CD14-positive monocyte (primary cell): ENCODE measurements at regions of chr16 and their contacts with region 1.

Region 1: DNA sequence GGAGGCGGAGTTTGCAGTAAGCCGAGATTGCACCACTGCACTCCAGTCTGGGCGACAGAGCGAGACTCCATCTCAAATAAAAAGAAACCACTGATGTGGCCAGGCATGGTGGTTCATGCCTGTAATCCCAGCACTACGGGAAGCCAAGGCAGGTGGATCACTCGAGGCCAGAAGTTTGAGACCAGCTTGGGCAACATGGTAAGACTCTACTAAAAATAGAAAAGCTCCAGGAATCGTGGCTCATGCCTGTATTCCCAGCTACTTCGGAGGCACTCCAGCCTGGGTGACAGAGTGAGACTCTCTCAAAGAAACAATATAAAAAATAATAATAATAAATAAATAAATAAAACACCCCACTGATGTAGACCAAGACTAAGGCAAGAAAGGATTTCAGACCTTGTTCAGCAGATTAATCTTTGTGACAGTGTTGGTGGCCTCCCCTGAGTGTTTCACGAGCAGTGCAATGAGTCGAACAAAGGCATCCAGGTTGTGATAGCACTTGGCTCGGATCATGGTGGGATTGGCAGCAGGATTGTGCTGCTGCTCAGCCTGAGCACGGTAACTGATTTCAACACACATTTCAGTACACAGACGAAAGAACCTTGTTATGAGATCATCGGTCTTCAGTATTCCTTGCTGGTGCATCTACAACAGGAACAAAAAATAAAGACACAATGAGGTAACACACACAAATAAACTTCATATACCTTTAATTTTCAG is 18.6 kb downstream of the SETD6 start:
- DNase-seq: no peak
- H3K4me3 ChIP-seq: no peak overlapping the region
- H3K4me3 Mint-ChIP-seq: no peak overlapping the region
- H3K27ac ChIP-seq: no peak overlapping the region
- H3K27ac Mint-ChIP-seq: peak overlapping the region in 1 of 7 donors; percentile 46
- H3K4me1 ChIP-seq: no peaks in the 10 kb centered on the region
- H3K4me1 Mint-ChIP-seq: no peaks in the 10 kb centered on the region
- H3K27me3 ChIP-seq: no peaks in the 10 kb centered on the region
- H3K27me3 Mint-ChIP-seq: no peaks in the 10 kb centered on the region
- CTCF ChIP-seq: no peak

Region 2: DNA sequence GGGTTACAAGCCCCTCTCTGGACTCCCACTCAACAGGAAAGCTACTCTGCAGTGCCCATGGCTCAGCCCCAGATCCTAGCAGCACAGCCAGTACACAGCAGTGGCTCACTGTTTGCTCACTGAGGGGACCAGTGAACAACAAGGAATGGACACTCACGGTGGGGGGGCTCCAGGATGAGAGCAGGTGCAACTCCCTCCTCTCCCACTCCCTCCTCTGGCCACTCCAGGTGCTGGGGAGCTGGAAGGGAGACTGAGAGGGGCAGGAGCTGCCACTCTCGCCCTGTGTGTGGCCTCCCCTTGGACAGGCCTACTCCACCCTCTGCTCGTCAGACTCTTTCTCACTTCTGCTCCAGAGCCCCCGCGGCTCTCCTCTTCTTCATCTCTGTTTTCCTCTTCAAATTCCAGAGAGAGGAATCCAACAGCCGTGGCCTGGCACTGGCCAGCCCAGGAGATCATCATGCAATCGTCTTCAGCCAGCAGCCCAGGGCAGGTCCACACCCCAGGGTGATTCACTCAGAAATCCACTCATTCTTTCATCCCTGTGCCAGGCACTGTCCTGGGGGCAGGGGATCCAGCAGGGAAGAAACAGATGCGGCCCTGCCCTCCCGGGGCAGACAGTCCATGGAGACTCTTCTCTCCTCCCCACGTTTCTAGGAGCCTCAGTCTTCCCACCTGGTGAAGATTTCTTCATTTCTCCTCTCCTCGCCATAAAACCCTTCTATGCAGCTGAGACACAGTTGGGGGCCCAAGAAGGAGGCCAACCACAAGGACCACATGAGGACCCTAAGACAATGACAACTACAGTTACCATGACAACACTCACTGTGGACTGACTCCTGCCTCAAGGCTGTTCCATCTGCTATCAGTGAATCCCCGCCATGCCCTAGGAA is 435.5 kb before region 1 on chr16:
- intact Hi-C with region 1: no loop called
- DNase-seq: no peak
- H3K4me3 ChIP-seq: no peak overlapping the region
- H3K4me3 Mint-ChIP-seq: no peak overlapping the region
- H3K27ac ChIP-seq: no peak overlapping the region
- H3K27ac Mint-ChIP-seq: no peak overlapping the region
- H3K4me1 ChIP-seq: no peaks in the 10 kb centered on the region
- H3K4me1 Mint-ChIP-seq: peaks cover 13% of the 10 kb centered on the region
- H3K27me3 ChIP-seq: no peaks in the 10 kb centered on the region
- H3K27me3 Mint-ChIP-seq: peaks cover 0 to 8% (median 4%) of the 10 kb centered on the region in 3 donors
- CTCF ChIP-seq: no peak

Region 3: GRCh38 chr16:58574895-58575294 is 41.0 kb after region 1 on chr16:
- intact Hi-C with region 1: loop called (anchors 5 kb)
- DNase-seq: no peak
- H3K4me3 ChIP-seq: no peak overlapping the region
- H3K4me3 Mint-ChIP-seq: no peak overlapping the region
- H3K27ac ChIP-seq: no peak overlapping the region
- H3K27ac Mint-ChIP-seq: peak overlapping the region in 1 of 7 donors; percentile 47
- H3K4me1 ChIP-seq: no peaks in the 10 kb centered on the region
- H3K4me1 Mint-ChIP-seq: no peaks in the 10 kb centered on the region
- H3K27me3 ChIP-seq: no peaks in the 10 kb centered on the region
- H3K27me3 Mint-ChIP-seq: no peaks in the 10 kb centered on the region
- CTCF ChIP-seq: no peak

Region 4: DNA sequence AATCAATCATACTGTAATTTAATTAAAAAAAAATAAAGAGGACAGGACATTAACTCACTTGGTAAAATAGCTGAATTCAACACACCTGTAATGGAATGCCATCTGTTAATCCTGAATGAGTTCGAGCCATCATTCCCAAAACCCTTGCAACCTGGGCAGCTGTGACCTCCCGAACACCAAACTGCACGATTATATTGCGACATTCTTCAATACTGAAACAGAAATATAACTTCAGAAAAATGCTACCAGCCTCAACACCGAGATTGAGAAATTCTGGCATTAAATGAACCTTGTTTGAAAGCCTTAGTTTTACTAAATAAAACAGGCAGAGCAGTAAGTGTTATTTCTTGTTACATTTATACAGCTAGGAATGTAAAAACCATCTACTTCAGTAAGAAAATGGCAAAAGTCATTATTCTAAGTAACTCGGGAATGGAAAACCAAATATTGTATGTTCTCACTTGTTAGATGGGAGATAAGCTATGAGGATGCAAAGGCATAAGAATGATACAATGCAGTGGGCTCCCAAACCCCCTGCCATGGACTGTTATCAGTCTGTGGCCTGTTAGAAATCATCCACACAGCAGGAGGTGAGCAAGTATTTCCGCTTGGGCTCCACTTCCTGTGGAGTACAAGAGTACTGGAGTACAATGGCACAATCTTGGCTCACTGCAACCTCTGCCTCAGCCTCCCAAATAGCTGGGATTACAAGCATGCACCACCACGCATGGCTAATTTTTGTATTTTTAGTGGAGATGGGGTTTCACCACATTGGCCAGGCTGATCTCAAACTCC is 49.3 kb after region 1 on chr16:
- intact Hi-C with region 1: loop called in 1 of 2 experiments (anchors 5 kb)
- DNase-seq: no peak
- H3K4me3 ChIP-seq: no peak overlapping the region
- H3K4me3 Mint-ChIP-seq: no peak overlapping the region
- H3K27ac ChIP-seq: no peak overlapping the region
- H3K27ac Mint-ChIP-seq: peak overlapping the region in 1 of 7 donors; percentile 69
- H3K4me1 ChIP-seq: no peaks in the 10 kb centered on the region
- H3K4me1 Mint-ChIP-seq: no peaks in the 10 kb centered on the region
- H3K27me3 ChIP-seq: no peaks in the 10 kb centered on the region
- H3K27me3 Mint-ChIP-seq: no peaks in the 10 kb centered on the region
- CTCF ChIP-seq: no peak

Region 5: DNA sequence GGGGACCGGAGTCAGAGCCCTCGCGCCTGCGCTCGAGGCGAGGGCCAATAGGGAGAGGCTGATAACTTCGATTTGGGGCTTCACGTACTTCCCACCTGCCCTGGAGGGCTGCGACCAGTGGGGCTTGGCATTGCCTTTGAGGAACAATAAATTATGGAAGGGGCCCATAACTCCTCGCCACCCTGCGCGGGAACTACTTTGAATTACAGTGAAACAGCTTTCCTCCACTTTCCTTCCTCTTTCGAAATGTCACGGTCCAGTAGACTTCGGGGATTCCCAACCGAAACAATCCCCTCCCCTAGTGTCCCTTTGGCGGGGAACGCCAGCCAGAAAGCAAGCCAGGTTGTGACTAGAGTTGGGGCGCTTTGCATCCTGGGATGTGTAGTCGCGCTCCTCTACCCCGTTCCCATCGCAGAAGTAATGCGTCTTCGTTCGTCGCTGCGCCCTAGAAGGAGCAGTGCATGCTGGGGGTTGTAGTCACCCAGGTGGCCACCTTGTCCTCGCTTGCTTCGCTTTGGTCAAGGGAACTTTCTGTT is 96.3 kb after region 1 on chr16:
- intact Hi-C with region 1: no loop called
- DNase-seq: peak; percentile 95 to 98 (median 96)
- H3K4me3 ChIP-seq: peak overlapping the region; percentile 59 to 99 (median 73)
- H3K4me3 Mint-ChIP-seq: peak overlapping the region; percentile 99
- H3K27ac ChIP-seq: peak overlapping the region; percentile 93 to 98
- H3K27ac Mint-ChIP-seq: peak overlapping the region; percentile 99 to 100 (median 100)
- H3K4me1 ChIP-seq: peaks cover 17 to 32% of the 10 kb centered on the region in 2 donors
- H3K4me1 Mint-ChIP-seq: peaks cover 19% of the 10 kb centered on the region
- H3K27me3 ChIP-seq: no peaks in the 10 kb centered on the region
- H3K27me3 Mint-ChIP-seq: no peaks in the 10 kb centered on the region
- CTCF ChIP-seq: no peak